ENCODE measurements at regions of chr6 and their contacts with region 1.

Region 1: GRCh38 chr6:2353412-2354137 is 108.2 kb upstream of the GMDS start:
- DNase-seq: peak; percentile 86
- ATAC-seq: peak; percentile 72
- H3K4me3 ChIP-seq: no peak overlapping the region
- H3K27ac ChIP-seq: peak overlapping the region; percentile 15; the same call in 1 of the 2 replicates
- H3K4me1 ChIP-seq: peaks cover 8% of the 10 kb centered on the region
- H3K27me3 ChIP-seq: no peaks in the 10 kb centered on the region
- CTCF ChIP-seq: peak; percentile 94
- POLR2A ChIP-seq: no peak
- RAD21 ChIP-seq: peak; percentile 90

Region 2: GRCh38 chr6:1604158-1605030 is 749.2 kb before region 1 on chr6:
- CTCF ChIA-PET with region 1: no interaction called
- POLR2A ChIA-PET with region 1: no interaction called
- dilution Hi-C with region 1: no loop called
- in situ Hi-C with region 1: loop called (anchors 5 kb)
- intact Hi-C with region 1: loop called (anchors 2 kb)
- DNase-seq: peak; percentile 36
- ATAC-seq: peak; percentile 93
- H3K4me3 ChIP-seq: peak overlapping the region; percentile 45
- H3K27ac ChIP-seq: no peak overlapping the region
- H3K4me1 ChIP-seq: peaks cover 2% of the 10 kb centered on the region; the same call in 1 of the 2 replicates
- H3K27me3 ChIP-seq: peaks cover 29% of the 10 kb centered on the region
- CTCF ChIP-seq: peak; percentile 95
- POLR2A ChIP-seq: no peak
- RAD21 ChIP-seq: peak; percentile 97

Region 3: GRCh38 chr6:2103644-2104523 is 249.7 kb before region 1 on chr6:
- CTCF ChIA-PET with region 1: interaction called, 5 read pairs
- POLR2A ChIA-PET with region 1: no interaction called
- dilution Hi-C with region 1: no loop called
- in situ Hi-C with region 1: loop called (anchors 10 kb)
- intact Hi-C with region 1: loop called (anchors 2 kb)
- DNase-seq: peak; percentile 69
- ATAC-seq: peak; percentile 82
- H3K4me3 ChIP-seq: no peak overlapping the region
- H3K27ac ChIP-seq: no peak overlapping the region
- H3K4me1 ChIP-seq: peaks cover 3% of the 10 kb centered on the region
- H3K27me3 ChIP-seq: no peaks in the 10 kb centered on the region
- CTCF ChIP-seq: peak; percentile 81
- POLR2A ChIP-seq: 0 out of 2 replicates have a peak, but pooled peaks have one; percentile 29
- RAD21 ChIP-seq: peak; percentile 92

Region 4: GRCh38 chr6:2245094-2245876 is 108.3 kb before region 1 on chr6 and contains the start of gene GMDS:
- CTCF ChIA-PET with region 1: no interaction called
- POLR2A ChIA-PET with region 1: no interaction called
- dilution Hi-C with region 1: no loop called
- in situ Hi-C with region 1: no loop called
- intact Hi-C with region 1: loop called (anchors 2 kb)
- DNase-seq: peak; percentile 91
- ATAC-seq: peak; percentile 99
- H3K4me3 ChIP-seq: peak within 1 kb of the TSS; percentile 88
- H3K27ac ChIP-seq: peak within 1 kb of the TSS; percentile 90
- H3K4me1 ChIP-seq: peaks cover 5% of the 10 kb centered on the region
- H3K27me3 ChIP-seq: no peaks in the 10 kb centered on the region
- CTCF ChIP-seq: no peak
- POLR2A ChIP-seq: peak; percentile 86
- RAD21 ChIP-seq: peak; percentile 14; the same call in 1 of the 2 replicates
- total RNA-seq, gene GMDS: 7.3 and 9.4 TPM in 2 replicates

Region 5: GRCh38 chr6:2524090-2524489 is 170.5 kb after region 1 on chr6:
- CTCF ChIA-PET with region 1: no interaction called
- POLR2A ChIA-PET with region 1: no interaction called
- dilution Hi-C with region 1: no loop called
- in situ Hi-C with region 1: no loop called
- intact Hi-C with region 1: no loop called
- DNase-seq: no peak
- ATAC-seq: no peak
- H3K4me3 ChIP-seq: no peak overlapping the region
- H3K27ac ChIP-seq: no peak overlapping the region
- H3K4me1 ChIP-seq: peaks cover 7% of the 10 kb centered on the region; the same call in 1 of the 2 replicates
- H3K27me3 ChIP-seq: peaks cover 8% of the 10 kb centered on the region; the same call in 1 of the 2 replicates
- CTCF ChIP-seq: peak; percentile 12; the same call in 1 of the 2 replicates
- POLR2A ChIP-seq: no peak
- RAD21 ChIP-seq: no peak

Region 6: DNA sequence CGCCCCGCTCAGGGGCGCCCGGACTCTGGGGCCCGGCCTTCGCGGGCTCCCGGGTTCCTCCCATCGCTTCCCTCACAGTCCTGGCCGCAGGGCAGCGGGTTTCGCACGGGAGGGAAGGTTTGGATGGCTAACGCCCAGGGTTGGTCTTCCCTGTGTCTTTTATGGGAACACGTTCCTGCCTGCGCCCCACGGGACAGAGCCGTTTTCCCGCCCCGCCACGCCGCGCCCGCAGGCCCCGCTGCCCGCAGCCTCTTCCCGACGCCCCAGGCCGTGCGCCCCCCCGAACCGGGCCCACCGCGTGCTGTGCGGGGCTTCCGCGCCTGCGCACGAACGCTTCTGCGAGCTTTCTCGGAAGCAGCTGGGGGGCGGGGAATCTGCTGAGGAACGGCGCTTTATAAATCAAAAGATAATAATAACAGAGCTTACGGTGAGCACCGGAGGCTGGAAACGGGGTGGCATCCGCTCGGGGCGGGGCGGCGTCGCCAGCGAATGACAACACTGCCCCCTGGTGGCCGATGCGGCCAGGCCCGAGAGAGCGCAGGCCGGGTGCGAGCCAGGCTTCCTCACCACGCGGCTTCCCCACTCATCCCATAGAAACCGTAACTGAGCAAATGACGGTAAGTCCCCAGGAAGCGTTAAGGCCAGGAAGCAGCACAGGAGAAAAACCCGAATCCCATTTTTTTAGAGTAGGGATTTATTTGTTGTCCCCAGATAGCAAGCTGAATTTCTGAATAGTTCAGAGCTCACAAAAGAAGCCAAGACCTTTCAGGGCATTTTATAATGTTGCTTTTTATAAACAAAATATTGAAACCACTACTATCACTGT is 280.8 kb after region 1 on chr6:
- CTCF ChIA-PET with region 1: interaction called, 4 read pairs
- POLR2A ChIA-PET with region 1: no interaction called
- dilution Hi-C with region 1: no loop called
- in situ Hi-C with region 1: loop called (anchors 10 kb)
- intact Hi-C with region 1: loop called (anchors 5 kb)
- DNase-seq: peak; percentile 81
- ATAC-seq: peak; percentile 88
- H3K4me3 ChIP-seq: peak overlapping the region; percentile 17; the same call in 1 of the 2 replicates
- H3K27ac ChIP-seq: peak overlapping the region; percentile 24
- H3K4me1 ChIP-seq: peaks cover 19% of the 10 kb centered on the region
- H3K27me3 ChIP-seq: peaks cover under 1% of the 10 kb centered on the region
- CTCF ChIP-seq: peak; percentile 97
- POLR2A ChIP-seq: 0 out of 2 replicates have a peak, but pooled peaks have one; percentile 33
- RAD21 ChIP-seq: peak; percentile 94

Measured in IMR-90 (cell line).